MCF 10A (cell line): ENCODE measurements at regions of chr6 and their contacts with region 1.

Region 1: DNA sequence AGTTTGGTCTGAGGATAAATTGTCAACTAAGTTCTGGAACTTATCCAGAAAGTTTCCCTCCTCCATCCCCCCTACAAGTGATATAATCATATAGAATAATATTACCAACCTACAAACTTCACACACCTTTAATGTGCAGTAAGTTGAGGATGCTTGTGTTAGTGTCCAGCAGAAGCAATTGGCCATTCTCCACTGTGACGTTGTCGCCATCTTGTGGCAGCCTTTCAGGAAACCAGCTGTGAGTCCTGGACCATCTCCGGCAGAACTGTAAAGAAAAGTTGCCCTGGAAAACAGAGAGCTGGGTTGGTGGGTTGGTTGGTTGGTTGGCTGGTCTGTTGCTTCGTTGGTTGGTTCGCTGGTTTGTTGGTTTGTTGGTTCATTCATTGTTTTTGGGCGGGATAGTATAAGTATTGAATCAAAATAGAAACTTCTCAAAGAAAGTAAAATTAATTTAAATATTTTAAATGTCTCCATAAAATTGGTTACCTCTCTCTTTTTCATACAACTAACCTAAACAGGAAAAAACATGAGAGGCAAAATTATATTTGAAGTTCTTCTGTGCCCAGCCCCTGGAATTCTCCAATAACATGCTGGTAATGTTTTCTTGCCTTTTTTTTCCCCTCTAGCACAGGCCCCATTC is 127.5 kb downstream of the PKHD1 start:
- DNase-seq: peak; percentile 82
- H3K4me3 Mint-ChIP-seq: no peak overlapping the region
- H3K27ac Mint-ChIP-seq: no peak overlapping the region
- H3K4me1 Mint-ChIP-seq: no peaks in the 10 kb centered on the region
- H3K27me3 Mint-ChIP-seq: peaks cover 55% of the 10 kb centered on the region
- CTCF ChIP-seq: peak; percentile 90

Region 2: DNA sequence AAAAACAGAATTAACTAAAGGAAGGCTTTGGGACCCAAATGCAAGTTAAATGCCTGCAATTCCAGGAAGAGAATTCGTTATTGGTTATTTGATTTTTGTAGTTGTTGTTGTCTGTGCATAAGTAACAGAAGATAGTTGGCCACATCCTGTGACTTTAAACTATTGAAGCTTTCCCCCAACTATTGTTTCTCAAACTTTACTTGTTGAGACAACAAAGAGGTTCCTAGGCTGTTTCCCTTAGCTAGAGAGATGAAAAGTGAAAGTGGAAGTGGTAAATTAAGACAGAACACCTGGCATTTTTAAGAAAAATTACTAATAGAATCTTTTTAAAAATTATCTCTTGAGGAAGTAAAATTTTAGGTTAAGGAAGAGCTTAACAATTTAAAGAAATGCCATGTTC is 397.7 kb before region 1 on chr6:
- CTCF ChIA-PET with region 1: interaction called, 92 read pairs
- POLR2A ChIA-PET with region 1: no interaction called
- intact Hi-C with region 1: loop called (anchors 1 kb)
- DNase-seq: no peak
- H3K4me3 Mint-ChIP-seq: no peak overlapping the region
- H3K27ac Mint-ChIP-seq: no peak overlapping the region
- H3K4me1 Mint-ChIP-seq: no peaks in the 10 kb centered on the region
- H3K27me3 Mint-ChIP-seq: no peaks in the 10 kb centered on the region
- CTCF ChIP-seq: no peak

Region 3: GRCh38 chr6:51844336-51844735 is 115.5 kb before region 1 on chr6:
- CTCF ChIA-PET with region 1: interaction called, 15 read pairs
- POLR2A ChIA-PET with region 1: interaction called, 3 read pairs
- intact Hi-C with region 1: no loop called
- DNase-seq: peak; percentile 23
- H3K4me3 Mint-ChIP-seq: no peak overlapping the region
- H3K27ac Mint-ChIP-seq: no peak overlapping the region
- H3K4me1 Mint-ChIP-seq: no peaks in the 10 kb centered on the region
- H3K27me3 Mint-ChIP-seq: no peaks in the 10 kb centered on the region
- CTCF ChIP-seq: peak; percentile 21

Region 4: DNA sequence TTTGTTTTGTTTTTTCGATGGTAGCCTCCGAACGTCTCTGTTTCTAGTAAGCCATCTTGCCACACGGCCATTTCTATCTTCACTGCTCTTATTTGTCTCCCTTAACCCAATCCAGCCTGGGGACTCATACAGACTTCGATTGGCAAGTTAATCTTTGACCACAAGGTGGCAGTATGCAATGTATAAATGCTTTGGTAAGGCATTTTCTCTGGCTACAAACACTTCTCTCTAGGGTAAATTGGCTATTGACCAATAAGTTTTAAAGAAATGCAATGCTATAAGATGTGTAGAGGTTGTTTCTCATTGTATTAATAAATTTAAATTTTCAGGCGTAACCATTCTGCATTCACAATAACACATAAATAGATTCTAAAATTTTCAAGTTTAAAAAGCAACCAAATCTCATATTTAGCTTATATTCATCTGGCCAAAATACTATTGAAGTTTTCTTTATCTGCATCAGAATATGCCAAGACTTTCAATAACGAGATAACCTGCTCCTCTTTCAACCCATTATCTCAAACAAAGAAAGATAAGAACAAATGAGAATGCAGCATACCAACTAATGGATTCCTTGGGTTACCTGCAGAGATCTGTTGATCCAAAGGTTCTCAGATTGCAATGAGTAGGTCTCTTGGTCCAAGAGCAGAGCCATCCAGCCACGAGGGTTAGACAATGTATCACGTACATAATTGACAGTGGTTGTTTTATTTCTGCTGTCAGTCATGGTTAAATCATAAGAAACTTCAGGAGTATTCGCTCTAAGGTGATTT is 104.4 kb before region 1 on chr6:
- CTCF ChIA-PET with region 1: interaction called, 32 read pairs
- POLR2A ChIA-PET with region 1: no interaction called
- intact Hi-C with region 1: loop called (anchors 1 kb)
- DNase-seq: peak; percentile 78
- H3K4me3 Mint-ChIP-seq: no peak overlapping the region
- H3K27ac Mint-ChIP-seq: no peak overlapping the region
- H3K4me1 Mint-ChIP-seq: peaks cover 6% of the 10 kb centered on the region
- H3K27me3 Mint-ChIP-seq: no peaks in the 10 kb centered on the region
- CTCF ChIP-seq: peak; percentile 58

Region 5: DNA sequence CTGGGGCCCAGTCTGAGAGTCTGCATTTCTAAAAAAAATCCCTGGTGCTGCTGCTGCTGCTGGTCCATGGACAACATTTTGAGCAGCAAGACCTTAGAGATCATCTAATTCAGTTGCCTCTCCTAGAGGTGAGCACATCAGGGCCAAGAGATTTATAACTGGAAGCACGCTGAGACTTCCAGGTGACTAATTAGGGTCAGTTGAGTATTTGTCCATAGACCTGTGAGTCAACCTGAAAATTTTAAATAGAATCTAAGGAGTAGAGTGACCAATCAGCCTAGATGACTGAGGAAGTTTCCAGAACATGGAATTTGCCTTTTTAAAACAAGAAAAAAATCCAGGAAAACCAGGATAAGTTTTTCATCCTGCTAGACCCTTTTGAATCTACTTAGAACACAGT is 93.9 kb before region 1 on chr6:
- CTCF ChIA-PET with region 1: interaction called, 16 read pairs
- POLR2A ChIA-PET with region 1: no interaction called
- intact Hi-C with region 1: no loop called
- DNase-seq: no peak
- H3K4me3 Mint-ChIP-seq: no peak overlapping the region
- H3K27ac Mint-ChIP-seq: no peak overlapping the region
- H3K4me1 Mint-ChIP-seq: no peaks in the 10 kb centered on the region
- H3K27me3 Mint-ChIP-seq: peaks cover 4% of the 10 kb centered on the region
- CTCF ChIP-seq: no peak

Region 6: DNA sequence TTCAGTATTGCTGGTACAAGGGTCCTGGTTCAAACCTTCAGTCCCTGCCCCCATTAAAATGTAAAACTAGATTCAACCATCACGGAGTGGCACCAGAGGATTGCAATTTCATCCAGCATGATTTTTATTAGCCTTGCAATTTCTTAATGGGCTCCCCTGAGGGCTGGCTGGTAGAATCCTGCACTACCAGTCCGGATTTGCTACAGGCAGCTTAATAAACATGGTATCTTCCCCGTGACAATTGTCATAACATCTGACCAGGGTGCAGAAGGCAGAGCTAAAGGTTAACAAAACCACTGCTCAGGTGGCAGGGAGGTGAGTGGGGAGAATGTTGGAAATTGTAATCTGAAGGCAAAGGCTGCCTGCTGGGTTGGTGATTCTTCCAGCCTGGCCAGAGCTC is 33.0 kb after region 1 on chr6:
- CTCF ChIA-PET with region 1: no interaction called
- POLR2A ChIA-PET with region 1: no interaction called
- intact Hi-C with region 1: no loop called
- DNase-seq: no peak
- H3K4me3 Mint-ChIP-seq: no peak overlapping the region
- H3K27ac Mint-ChIP-seq: no peak overlapping the region
- H3K4me1 Mint-ChIP-seq: no peaks in the 10 kb centered on the region
- H3K27me3 Mint-ChIP-seq: peaks cover 31% of the 10 kb centered on the region
- CTCF ChIP-seq: no peak

Region 7: DNA sequence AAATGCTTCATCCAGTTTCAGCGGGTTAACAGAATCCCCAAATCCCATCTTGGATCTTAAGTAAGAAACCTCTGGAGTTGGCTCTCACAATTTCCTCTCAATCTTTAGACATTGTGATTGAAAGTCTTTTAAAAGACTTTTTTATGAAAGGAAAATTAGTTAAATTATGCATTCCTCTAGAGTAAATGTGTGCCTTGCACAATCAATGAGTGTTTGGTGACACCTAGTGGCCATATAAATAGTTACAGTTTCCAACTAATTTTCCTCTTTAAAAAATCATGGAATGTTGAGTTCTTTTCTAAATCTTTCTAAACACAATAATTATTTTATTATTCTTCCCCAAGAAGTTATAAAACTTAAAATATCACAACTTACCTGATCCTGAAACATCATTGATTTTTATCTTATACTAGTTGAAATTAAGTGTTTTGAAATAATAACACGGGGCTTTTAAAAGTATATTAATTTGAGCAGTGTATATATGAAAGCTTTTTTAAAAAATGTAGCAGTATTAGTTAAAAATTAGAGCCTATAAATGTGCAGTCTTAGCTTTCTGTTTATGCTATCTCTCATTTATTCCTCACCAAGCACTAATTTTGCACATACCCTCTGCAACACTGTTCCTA is 61.2 kb after region 1 on chr6:
- CTCF ChIA-PET with region 1: interaction called, 62 read pairs
- POLR2A ChIA-PET with region 1: no interaction called
- intact Hi-C with region 1: loop called (anchors 2 kb)
- DNase-seq: peak; percentile 45
- H3K4me3 Mint-ChIP-seq: no peak overlapping the region
- H3K27ac Mint-ChIP-seq: no peak overlapping the region
- H3K4me1 Mint-ChIP-seq: no peaks in the 10 kb centered on the region
- H3K27me3 Mint-ChIP-seq: peaks cover 20% of the 10 kb centered on the region
- CTCF ChIP-seq: peak; percentile 53

Region 8: DNA sequence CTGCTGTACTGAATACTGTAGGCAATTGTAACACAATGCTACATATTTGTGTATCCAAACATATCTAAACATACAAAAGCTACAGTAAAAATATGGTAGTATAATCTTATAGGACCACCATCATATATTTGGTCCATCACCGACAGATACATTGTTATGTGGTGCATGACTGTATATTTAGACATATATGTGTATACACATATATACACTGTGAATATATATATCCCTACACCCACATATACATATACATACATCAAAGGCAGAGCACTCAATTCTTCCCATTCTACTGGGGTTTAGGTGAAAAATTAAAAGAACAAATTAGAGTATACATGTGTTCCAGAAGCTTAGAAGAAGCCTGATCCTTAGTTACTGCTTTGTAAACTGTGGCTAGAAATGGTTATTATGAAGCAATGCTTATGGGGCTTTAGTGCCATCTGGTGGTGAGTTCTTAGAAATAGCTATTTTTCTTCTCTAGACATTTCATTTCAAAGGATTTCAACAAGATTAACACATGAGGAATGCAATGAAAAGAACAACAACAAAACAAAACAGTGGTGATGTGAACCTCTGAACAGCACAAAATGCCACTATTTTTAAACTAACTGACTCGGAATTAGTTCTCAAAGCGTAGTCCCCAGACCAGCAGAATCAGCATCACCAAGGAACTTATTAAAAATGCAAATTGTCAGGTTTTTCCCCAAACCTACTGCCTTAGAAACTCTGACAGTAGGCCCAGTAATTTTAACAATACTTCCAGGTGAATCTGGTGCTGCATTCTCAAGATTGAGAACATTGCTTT is 89.6 kb after region 1 on chr6:
- CTCF ChIA-PET with region 1: interaction called, 13 read pairs
- POLR2A ChIA-PET with region 1: no interaction called
- intact Hi-C with region 1: no loop called
- DNase-seq: peak; percentile 50
- H3K4me3 Mint-ChIP-seq: no peak overlapping the region
- H3K27ac Mint-ChIP-seq: no peak overlapping the region
- H3K4me1 Mint-ChIP-seq: peaks cover 9% of the 10 kb centered on the region
- H3K27me3 Mint-ChIP-seq: peaks cover 40% of the 10 kb centered on the region
- CTCF ChIP-seq: peak; percentile 49